Dorsolateral prefrontal cortex (tissue), 120 donors: ENCODE measurements at regions of chr7 and their contacts with region 1.

Region 1: DNA sequence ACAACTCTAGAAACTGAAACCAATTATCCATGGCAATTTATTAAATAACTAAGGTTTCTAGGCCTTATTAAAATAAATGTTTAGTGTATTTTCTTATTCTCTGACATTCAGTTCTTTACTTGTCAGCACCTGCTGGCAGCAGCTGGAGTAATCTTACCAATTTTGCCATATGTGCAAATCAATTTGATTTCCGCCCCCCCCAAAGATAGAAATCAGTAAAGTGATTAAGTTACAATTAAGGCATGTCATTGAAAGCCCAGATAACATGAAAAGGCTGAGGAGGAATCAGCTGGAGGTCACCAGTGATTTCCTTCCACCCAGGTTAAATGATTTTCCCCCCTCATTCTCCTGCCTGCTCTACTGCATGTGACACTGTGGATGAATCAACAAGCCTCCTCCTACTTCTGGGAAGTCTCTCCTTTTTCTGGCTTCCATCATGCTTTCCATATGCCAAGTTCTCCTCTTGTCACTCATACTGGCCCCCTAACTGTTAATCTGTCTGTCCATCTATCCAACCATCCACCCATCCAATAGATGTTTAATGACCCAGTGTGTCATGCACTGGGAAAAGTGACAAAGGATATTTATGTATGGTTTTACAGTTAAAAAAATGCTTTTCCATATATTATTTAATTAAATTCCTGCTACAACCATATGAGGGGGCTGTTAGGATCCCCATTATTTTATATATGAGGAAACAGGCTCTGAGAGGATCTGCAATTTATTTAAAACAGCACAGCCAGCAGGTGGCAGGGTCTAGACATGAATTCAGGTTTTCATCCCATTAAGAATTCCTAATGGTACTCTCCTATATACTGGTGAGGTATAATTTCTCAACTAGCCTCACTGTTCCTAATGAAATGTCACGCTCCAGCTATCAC is 116.5 kb downstream of the ATXN7L1 start:
- DNase-seq: peak in 6 of 10 donors; percentile 32 to 71 (median 49)
- H3K4me3 ChIP-seq: no peak overlapping the region
- H3K27ac ChIP-seq: no peak overlapping the region
- H3K27me3 ChIP-seq: no peaks in the 10 kb centered on the region
- CTCF ChIP-seq: peak in 55 of 56 donors; percentile 41 to 83 (median 66)

Region 2: DNA sequence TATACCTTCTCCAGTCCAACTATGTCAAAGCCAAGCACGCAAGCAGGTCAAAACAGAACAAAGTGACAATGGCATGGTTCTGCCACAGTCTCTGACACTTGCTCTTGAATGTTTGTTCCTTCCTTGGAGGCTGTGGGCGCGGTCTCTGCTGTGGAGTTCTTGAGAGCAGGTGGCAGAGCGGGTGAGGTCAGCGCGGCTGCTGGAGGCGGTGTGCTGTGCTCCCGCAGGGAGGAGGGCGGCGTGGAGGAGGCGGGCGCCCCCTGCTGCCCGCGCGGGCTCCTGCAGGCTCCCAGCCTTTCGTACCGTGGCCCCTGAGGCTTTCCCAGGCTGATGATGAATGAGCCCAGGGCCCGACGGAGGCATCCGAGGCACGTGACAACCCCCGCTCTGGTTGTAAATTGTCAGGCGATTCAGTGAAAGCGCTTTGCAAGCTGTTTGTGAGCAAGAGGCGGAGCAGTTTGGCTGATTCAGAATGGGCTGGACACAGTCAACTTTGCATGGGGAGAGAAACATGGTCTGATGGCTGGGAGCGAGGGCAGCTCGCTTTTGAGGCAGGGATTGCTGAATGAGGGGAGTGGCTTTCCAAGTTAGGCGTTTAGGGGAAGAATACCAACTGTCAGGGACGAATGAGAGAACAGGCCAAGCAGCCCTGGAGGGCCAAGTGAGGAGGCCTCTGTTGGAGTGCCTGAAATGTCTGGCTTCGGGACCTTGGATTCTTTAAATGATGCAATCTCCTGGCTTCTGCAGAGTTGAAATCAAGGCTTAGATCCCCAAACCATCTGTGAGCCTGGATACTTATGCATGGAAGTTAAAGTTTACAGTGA is 249.7 kb after region 1 on chr7:
- intact Hi-C with region 1: loop called in 1 of 2 experiments (anchors 2 kb)
- DNase-seq: peak; percentile 72 to 89 (median 82)
- H3K4me3 ChIP-seq: peak overlapping the region in 37 of 59 donors; percentile 1 to 52 (median 29)
- H3K27ac ChIP-seq: peak overlapping the region in 2 of 59 donors; percentile 26 to 34
- H3K27me3 ChIP-seq: no peaks in the 10 kb centered on the region
- CTCF ChIP-seq: peak; percentile 71 to 99 (median 96)

Region 3: GRCh38 chr7:106041140-106041717 is 281.3 kb after region 1 on chr7:
- intact Hi-C with region 1: loop called (anchors 2 to 5 kb)
- DNase-seq: peak in 2 of 10 donors; percentile 53
- H3K4me3 ChIP-seq: no peak overlapping the region
- H3K27ac ChIP-seq: no peak overlapping the region
- H3K27me3 ChIP-seq: peaks cover 0 to 3% (median 0%) of the 10 kb centered on the region in 45 donors
- CTCF ChIP-seq: peak; percentile 17 to 78 (median 64)

Region 4: GRCh38 chr7:106139265-106140251 is 379.6 kb after region 1 on chr7:
- intact Hi-C with region 1: loop called in 1 of 2 experiments (anchors 10 kb)
- DNase-seq: peak in 2 of 10 donors; percentile 55 to 71
- H3K4me3 ChIP-seq: no peak overlapping the region
- H3K27ac ChIP-seq: peak overlapping the region in 53 of 59 donors; percentile 1 to 86 (median 66)
- H3K27me3 ChIP-seq: no peaks in the 10 kb centered on the region
- CTCF ChIP-seq: no peak

Region 5: GRCh38 chr7:106153891-106154449 is 394.1 kb after region 1 on chr7:
- intact Hi-C with region 1: loop called (anchors 5 to 10 kb)
- DNase-seq: peak; percentile 82 to 93 (median 91)
- H3K4me3 ChIP-seq: peak overlapping the region in 19 of 59 donors; percentile 6 to 52 (median 27)
- H3K27ac ChIP-seq: peak overlapping the region in 4 of 59 donors; percentile 11 to 73 (median 22)
- H3K27me3 ChIP-seq: no peaks in the 10 kb centered on the region
- CTCF ChIP-seq: peak; percentile 78 to 99 (median 95)